Aorta (tissue), 5 donors: ENCODE measurements at regions of chr9 and their contacts with region 1.

Region 1: GRCh38 chr9:14573333-14573732 is 119.9 kb downstream of the ZDHHC21 start:
- DNase-seq: no peak
- ATAC-seq: no peak
- H3K4me3 ChIP-seq: no peak overlapping the region
- H3K27ac ChIP-seq: no peak overlapping the region
- H3K4me1 ChIP-seq: no peaks in the 10 kb centered on the region
- H3K27me3 ChIP-seq: no peaks in the 10 kb centered on the region

Region 2: GRCh38 chr9:14146201-14146874 is 427.0 kb before region 1 on chr9:
- intact Hi-C with region 1: no loop called
- DNase-seq: no peak
- ATAC-seq: no peak
- H3K4me3 ChIP-seq: no peak overlapping the region
- H3K27ac ChIP-seq: no peak overlapping the region
- H3K4me1 ChIP-seq: peaks cover 0 to 3% of the 10 kb centered on the region in 2 donors
- H3K27me3 ChIP-seq: no peaks in the 10 kb centered on the region

Region 3: DNA sequence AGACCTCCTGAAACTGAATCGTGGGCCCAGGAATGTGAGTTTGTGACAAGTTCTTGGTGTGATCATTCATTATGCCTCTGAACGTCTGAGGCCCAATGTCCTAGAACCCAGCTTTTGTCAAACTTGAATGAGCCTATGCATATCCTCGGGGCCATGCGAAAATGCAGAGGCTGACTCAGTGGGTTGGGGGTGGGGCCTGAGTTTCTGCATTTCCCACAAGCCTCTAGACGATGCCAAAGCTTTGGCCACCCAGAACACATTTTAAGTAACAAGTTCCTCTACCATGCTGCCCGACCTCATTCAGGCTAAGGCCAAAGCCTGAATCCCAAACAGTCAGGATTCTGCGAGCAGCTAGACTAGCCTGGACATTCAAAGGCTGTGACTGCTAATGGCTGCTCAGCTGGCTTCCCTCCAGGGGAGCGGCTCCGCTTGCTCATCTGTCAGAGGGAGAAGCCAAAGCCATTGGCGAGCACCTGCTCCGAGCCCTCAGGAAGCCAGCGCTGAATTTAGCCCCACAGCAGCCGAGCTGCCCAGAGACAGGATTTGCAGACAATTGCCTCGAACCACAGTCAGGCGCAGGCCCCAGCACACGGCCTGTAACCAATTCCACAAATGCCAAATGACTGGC is 57.6 kb before region 1 on chr9:
- intact Hi-C with region 1: loop called in 1 of 2 experiments (anchors 10 kb)
- DNase-seq: no peak
- ATAC-seq: peak; percentile 15
- H3K4me3 ChIP-seq: no peak overlapping the region
- H3K27ac ChIP-seq: no peak overlapping the region
- H3K4me1 ChIP-seq: no peaks in the 10 kb centered on the region
- H3K27me3 ChIP-seq: no peaks in the 10 kb centered on the region